Activated CD4-positive, alpha-beta memory T cell treated with anti-CD3 and anti-CD28 coated beads for 36 hours (primary cell): ENCODE measurements at regions of chr2 and their contacts with region 1.

Region 1: GRCh38 chr2:227106845-227107759 is 56.9 kb downstream of the COL4A4 start:
- DNase-seq: peak; percentile 56
- H3K4me3 Mint-ChIP-seq: no peak overlapping the region
- H3K27ac Mint-ChIP-seq: no peak overlapping the region
- H3K4me1 Mint-ChIP-seq: no peaks in the 10 kb centered on the region
- H3K27me3 Mint-ChIP-seq: peaks cover 2% of the 10 kb centered on the region

Region 2: GRCh38 chr2:225668606-225669266 is 1438.4 kb before region 1 on chr2:
- CTCF ChIA-PET with region 1: interaction called, 5 read pairs
- POLR2A ChIA-PET with region 1: no interaction called
- intact Hi-C with region 1: loop called (anchors 2 kb)
- DNase-seq: no peak
- H3K4me3 Mint-ChIP-seq: no peak overlapping the region
- H3K27ac Mint-ChIP-seq: no peak overlapping the region
- H3K4me1 Mint-ChIP-seq: no peaks in the 10 kb centered on the region
- H3K27me3 Mint-ChIP-seq: peaks cover 2% of the 10 kb centered on the region

Region 3: GRCh38 chr2:225889446-225889850 is 1217.7 kb before region 1 on chr2:
- CTCF ChIA-PET with region 1: interaction called, 4 read pairs
- POLR2A ChIA-PET with region 1: no interaction called
- intact Hi-C with region 1: loop called (anchors 5 kb)
- DNase-seq: no peak
- H3K4me3 Mint-ChIP-seq: no peak overlapping the region
- H3K27ac Mint-ChIP-seq: no peak overlapping the region
- H3K4me1 Mint-ChIP-seq: no peaks in the 10 kb centered on the region
- H3K27me3 Mint-ChIP-seq: peaks cover 4% of the 10 kb centered on the region

Region 4: GRCh38 chr2:226215902-226216503 is 891.1 kb before region 1 on chr2:
- CTCF ChIA-PET with region 1: no interaction called
- POLR2A ChIA-PET with region 1: no interaction called
- intact Hi-C with region 1: loop called (anchors 5 kb)
- DNase-seq: peak; percentile 71
- H3K4me3 Mint-ChIP-seq: no peak overlapping the region
- H3K27ac Mint-ChIP-seq: no peak overlapping the region
- H3K4me1 Mint-ChIP-seq: no peaks in the 10 kb centered on the region
- H3K27me3 Mint-ChIP-seq: no peaks in the 10 kb centered on the region

Region 5: DNA sequence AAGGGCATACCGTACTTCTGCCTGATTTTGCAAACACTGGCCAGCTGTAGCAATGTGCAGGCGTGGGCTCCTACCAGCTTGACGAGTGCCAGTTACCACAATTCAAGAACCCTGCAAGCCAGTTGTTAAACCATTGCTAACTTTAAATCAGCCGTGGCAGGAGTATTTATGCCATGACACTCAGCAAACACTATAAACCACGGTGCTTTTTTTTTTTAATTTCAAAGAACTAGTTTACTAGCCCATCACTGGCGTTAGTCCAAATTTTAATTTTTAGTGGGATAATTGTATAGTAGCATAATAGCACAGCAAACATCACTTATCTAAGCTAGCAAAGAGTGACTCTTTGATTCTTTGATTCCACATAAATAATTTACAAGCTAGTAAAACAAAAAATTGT is 54.2 kb before region 1 on chr2:
- CTCF ChIA-PET with region 1: no interaction called
- POLR2A ChIA-PET with region 1: no interaction called
- intact Hi-C with region 1: no loop called
- DNase-seq: no peak
- H3K4me3 Mint-ChIP-seq: no peak overlapping the region
- H3K27ac Mint-ChIP-seq: no peak overlapping the region
- H3K4me1 Mint-ChIP-seq: no peaks in the 10 kb centered on the region
- H3K27me3 Mint-ChIP-seq: peaks cover 7% of the 10 kb centered on the region

Region 6: GRCh38 chr2:227188292-227188691 is 81.2 kb after region 1 on chr2:
- CTCF ChIA-PET with region 1: no interaction called
- POLR2A ChIA-PET with region 1: no interaction called
- intact Hi-C with region 1: no loop called
- DNase-seq: no peak
- H3K4me3 Mint-ChIP-seq: no peak overlapping the region
- H3K27ac Mint-ChIP-seq: no peak overlapping the region
- H3K4me1 Mint-ChIP-seq: no peaks in the 10 kb centered on the region
- H3K27me3 Mint-ChIP-seq: peaks cover 18% of the 10 kb centered on the region

Region 7: DNA sequence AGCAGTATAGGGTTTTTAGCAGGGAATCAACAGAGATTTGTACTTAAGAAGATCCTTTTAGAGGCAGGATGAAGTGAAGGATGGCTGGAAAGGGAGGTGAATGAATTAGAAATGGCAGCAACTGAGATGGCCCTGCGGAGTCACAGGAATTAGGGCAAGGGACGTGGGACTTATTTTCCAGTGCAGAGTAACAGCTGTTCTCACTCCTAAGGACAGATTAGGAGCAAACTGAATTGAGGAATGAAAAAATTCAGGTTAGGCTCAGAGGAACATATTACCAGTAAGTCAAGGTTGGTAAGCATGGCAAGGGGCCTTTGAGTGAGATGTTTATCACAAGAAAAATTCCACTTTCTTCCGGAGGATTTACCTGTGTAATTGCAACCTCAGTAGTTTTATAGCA is 91.8 kb after region 1 on chr2:
- CTCF ChIA-PET with region 1: no interaction called
- POLR2A ChIA-PET with region 1: no interaction called
- intact Hi-C with region 1: no loop called
- DNase-seq: no peak
- H3K4me3 Mint-ChIP-seq: no peak overlapping the region
- H3K27ac Mint-ChIP-seq: no peak overlapping the region
- H3K4me1 Mint-ChIP-seq: no peaks in the 10 kb centered on the region
- H3K27me3 Mint-ChIP-seq: no peaks in the 10 kb centered on the region